HEK293 (cell line): ENCODE measurements at regions of chr1 and their contacts with region 1.

Region 1: DNA sequence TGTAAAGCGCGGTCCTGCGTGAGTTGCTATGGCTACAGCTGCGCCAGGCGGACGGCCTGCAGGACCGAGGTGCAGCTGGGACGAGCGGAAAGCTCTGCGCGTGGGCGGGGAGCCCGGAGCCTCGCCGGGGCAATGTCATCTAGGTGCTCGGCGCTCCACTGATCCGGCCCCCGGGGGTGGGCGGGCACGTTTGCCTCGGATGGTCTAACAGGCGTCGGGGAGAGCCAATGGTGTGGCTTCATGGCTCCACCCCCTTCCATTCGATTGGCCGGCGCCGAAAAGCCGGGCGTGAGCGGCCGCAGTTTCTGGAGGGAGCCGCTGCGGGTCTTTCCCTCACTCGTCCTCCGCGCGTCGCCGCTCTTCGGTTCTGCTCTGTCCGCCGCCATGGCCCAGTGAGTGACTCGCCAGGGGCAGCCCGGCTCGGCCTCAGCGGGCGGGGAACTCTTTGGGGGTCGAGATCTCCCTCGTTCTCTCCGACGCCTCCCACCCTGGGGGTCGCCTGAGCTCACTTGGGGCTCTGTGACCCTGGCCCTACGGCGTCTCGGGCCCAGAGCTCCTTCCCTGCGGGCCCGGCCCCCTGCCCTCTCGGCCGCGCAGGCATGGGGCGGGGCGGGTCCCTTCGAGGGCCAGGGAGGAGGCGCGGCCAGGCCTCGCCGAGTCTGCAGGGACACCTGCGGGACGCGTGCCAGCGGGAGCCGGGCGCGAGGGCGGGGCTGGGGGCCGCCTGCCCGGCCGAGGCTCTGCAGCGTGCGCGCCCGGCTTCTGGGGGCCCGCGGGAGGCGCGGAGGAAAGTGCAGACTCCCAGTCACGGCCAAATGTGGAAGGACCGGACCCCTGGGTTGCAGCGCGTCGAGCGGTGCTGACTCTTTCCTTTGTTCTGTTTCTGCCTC is at the start of gene PGD:
- H3K4me3 ChIP-seq: peak within 1 kb of the TSS; percentile 62
- H3K27ac ChIP-seq: peak within 1 kb of the TSS; percentile 86
- H3K4me1 ChIP-seq: peaks cover 2% of the 10 kb centered on the region; the same call in 1 of the 2 replicates
- CTCF ChIP-seq: peak; percentile 82

Region 2: DNA sequence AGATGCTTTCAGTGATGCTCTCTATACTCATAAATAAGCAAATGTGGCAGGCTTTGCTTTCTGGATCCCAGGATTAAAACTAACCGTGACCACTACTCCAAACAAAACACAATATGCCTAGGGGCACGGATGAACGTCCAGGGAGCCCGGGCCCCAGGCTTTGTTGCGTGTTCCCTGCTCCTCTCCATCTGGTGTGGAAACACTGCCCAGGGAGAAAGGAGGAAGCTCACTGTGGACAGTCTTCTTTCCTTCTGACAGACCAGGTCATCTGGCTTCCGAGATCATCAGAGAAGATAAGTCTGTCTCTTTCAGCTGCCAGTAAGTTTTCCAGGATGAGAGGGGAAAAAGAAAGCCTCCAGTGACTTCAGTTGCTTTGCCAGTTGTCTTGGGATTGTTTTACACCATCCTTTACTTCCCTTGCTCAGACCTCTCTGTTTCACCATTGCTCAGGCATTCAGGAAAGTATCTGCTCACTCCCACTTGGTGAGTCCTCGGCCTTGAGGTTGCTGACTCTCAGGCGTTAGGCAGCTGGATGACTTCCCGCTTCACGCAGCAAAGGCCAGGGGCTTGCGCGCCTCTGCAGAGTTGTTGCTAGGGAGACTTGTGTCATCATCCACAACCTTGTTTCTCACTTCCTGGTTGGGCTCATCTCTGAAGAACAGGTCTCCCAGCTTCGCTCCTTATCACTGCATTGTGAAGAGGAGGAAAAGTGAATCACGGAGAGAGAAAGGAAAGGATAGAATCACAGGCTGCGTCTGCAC is 20.7 kb before region 1 on chr1:
- CTCF ChIA-PET with region 1: interaction called, 10 read pairs
- POLR2A ChIA-PET with region 1: interaction called, 6 read pairs
- H3K4me3 ChIP-seq: no peak overlapping the region
- H3K27ac ChIP-seq: no peak overlapping the region
- H3K4me1 ChIP-seq: no peaks in the 10 kb centered on the region
- CTCF ChIP-seq: no peak

Region 3: DNA sequence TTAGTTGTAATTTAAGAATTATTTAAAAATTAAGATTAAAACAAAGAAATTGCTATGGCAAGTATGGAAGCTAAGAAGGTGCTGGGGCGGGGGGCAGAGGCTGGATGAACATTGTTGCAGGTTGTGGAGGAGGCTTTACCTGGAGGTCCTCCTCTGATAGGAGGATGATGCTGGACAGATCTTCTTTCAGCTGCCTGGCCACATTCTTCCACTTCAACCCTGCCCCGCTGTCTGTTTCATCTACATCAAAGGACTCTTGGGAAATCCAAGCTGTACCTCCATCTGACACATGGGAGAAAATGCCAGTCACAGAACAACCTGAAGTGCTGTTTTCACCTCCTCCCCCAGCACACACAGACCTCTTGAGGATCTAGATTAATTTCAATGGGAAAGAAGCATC is 68.1 kb after region 1 on chr1:
- CTCF ChIA-PET with region 1: no interaction called
- POLR2A ChIA-PET with region 1: no interaction called
- H3K4me3 ChIP-seq: no peak overlapping the region
- H3K27ac ChIP-seq: no peak overlapping the region
- H3K4me1 ChIP-seq: no peaks in the 10 kb centered on the region
- CTCF ChIP-seq: no peak